Activated CD4-positive, alpha-beta T cell treated with anti-CD3 and anti-CD28 coated beads for 36 hours (primary cell): ENCODE measurements at regions of chr1 and their contacts with region 1.

Region 1: DNA sequence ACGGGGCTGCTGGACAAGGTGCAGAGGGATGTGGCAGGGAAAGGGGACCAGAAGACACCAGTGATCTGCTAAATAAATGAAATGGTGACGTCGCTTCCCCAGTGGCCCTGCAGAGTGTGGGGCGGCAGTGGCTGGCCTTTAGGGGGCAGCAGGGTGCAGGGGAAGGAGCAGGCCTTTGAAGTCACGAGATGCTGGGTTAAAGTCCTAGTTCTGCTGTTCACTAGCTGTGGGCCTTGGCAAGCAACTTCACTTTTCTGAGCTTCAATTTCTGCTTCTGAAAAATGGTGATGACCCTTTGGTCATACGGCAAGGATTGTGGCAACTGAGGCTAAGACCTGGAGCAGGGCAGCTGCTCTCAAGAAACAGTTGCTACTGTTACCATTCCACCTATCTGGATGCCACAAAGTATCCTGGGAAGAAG is 9.2 kb upstream of the GALE start:
- DNase-seq: peak; percentile 91
- ATAC-seq: peak; percentile 96
- H3K4me3 Mint-ChIP-seq: no peak overlapping the region
- H3K27ac Mint-ChIP-seq: no peak overlapping the region
- H3K4me1 Mint-ChIP-seq: peaks cover 13% of the 10 kb centered on the region
- H3K27me3 Mint-ChIP-seq: no peaks in the 10 kb centered on the region

Region 2: GRCh38 chr1:23772049-23772853 is 37.5 kb before region 1 on chr1:
- CTCF ChIA-PET with region 1: interaction called, 12 read pairs
- POLR2A ChIA-PET with region 1: interaction called, 3 read pairs
- intact Hi-C with region 1: no loop called
- DNase-seq: peak; percentile 94
- ATAC-seq: peak; percentile 95
- H3K4me3 Mint-ChIP-seq: no peak overlapping the region
- H3K27ac Mint-ChIP-seq: no peak overlapping the region
- H3K4me1 Mint-ChIP-seq: peaks cover 22% of the 10 kb centered on the region
- H3K27me3 Mint-ChIP-seq: no peaks in the 10 kb centered on the region

Region 3: GRCh38 chr1:23825076-23825761 is 15.5 kb after region 1 on chr1 and contains the start of gene HMGCL:
- CTCF ChIA-PET with region 1: interaction called, 41 read pairs
- POLR2A ChIA-PET with region 1: interaction called, 4 read pairs
- intact Hi-C with region 1: loop called in 1 of 2 experiments (anchors 1 kb)
- DNase-seq: peak; percentile 95
- ATAC-seq: peak; percentile 94
- H3K4me3 Mint-ChIP-seq: peak within 1 kb of the TSS; percentile 97
- H3K27ac Mint-ChIP-seq: peak within 1 kb of the TSS; percentile 97
- H3K4me1 Mint-ChIP-seq: peaks cover 19% of the 10 kb centered on the region
- H3K27me3 Mint-ChIP-seq: no peaks in the 10 kb centered on the region
- total RNA-seq, gene HMGCL: 31.9 to 46.0 TPM

Region 4: GRCh38 chr1:23854568-23854967 is 44.8 kb after region 1 on chr1:
- CTCF ChIA-PET with region 1: interaction called, 5 read pairs
- POLR2A ChIA-PET with region 1: no interaction called
- intact Hi-C with region 1: loop called in 1 of 2 experiments (anchors 1 kb)
- DNase-seq: peak; percentile 11
- ATAC-seq: peak; percentile 33
- H3K4me3 Mint-ChIP-seq: no peak overlapping the region
- H3K27ac Mint-ChIP-seq: no peak overlapping the region
- H3K4me1 Mint-ChIP-seq: no peaks in the 10 kb centered on the region
- H3K27me3 Mint-ChIP-seq: no peaks in the 10 kb centered on the region

Region 5: DNA sequence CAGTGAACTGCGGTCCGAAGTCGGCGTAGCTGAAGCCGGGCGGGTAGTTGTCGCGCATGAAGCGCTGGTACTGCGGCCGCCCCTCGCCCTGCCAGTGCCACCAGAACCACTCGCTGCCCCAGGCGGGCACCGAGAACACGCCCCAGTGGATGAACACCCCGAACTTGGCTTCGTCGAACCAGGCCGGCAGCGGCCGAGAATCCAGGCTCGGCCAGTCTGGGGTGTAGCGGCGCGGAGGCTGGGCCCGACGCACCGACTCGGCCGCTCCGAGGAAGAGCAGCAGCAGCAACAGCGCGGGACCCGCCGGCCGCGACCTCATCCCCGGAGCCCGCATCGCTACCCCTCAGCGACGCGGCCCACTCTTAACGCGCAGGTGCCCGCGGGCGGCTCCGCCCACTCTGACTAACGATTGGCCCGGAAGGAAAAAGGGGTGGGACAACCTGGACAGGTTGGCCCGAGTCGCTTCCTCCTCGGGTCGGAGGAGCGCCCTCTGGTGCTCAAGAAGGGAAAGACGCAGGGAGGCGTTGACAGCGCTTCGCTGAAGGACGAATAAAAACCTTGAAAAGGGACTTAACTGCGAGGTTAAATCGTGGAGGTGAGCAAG is 58.3 kb after region 1 on chr1 and contains the start of gene FUCA1:
- CTCF ChIA-PET with region 1: interaction called, 6 read pairs
- POLR2A ChIA-PET with region 1: no interaction called
- intact Hi-C with region 1: loop called (anchors 1 kb)
- DNase-seq: peak; percentile 95
- ATAC-seq: peak; percentile 97
- H3K4me3 Mint-ChIP-seq: peak within 1 kb of the TSS; percentile 76
- H3K27ac Mint-ChIP-seq: peak within 1 kb of the TSS; percentile 77
- H3K4me1 Mint-ChIP-seq: peaks cover 19% of the 10 kb centered on the region
- H3K27me3 Mint-ChIP-seq: no peaks in the 10 kb centered on the region
- total RNA-seq, gene FUCA1: 4.2 to 4.5 TPM

Region 6: DNA sequence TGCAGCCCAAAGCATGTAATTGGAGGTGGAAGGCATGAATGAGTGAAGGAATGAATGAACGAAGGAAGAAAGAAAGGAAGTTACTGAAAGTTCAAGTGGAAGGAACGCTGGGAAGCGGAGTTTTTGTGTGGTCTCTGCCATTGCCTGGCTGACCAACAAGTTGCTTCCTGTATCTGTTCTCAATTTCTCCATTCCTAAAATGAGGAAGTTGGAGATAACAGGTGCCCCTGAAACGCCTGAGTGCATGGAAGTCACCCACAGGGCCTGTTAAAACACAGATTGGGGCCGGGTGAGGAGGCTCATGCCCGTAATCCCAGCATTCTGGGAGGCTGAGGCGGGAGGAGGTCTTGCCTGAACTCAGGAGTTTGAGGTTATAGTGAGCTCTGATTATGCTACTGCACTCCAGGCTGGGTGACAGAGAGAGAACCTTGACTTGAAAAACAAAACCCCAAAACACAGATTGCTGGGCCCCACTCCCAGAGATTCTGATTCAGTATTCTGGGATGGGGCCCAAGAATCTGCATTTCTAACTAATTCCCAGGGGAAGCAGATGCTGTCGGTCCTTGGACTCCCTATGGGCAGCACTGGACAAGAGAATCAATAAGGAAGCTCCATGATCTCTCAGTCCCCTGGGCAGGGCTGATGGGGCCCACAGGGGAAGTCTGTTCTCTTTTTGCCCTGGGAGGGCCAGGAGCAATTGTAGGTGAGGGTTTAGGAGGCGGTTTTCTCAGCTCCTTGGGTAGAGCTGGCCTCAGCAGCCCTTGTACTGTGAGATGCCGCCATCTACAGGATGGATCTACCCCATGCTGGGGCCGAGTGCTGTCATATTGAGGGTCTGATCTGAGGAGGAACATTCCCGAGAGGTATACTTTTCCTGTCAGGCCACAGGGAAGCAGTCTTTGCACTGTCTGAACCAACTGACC is 106.7 kb after region 1 on chr1:
- CTCF ChIA-PET with region 1: interaction called, 21 read pairs
- POLR2A ChIA-PET with region 1: no interaction called
- intact Hi-C with region 1: loop called in 1 of 2 experiments (anchors 1 kb)
- DNase-seq: peak; percentile 75
- ATAC-seq: peak; percentile 94
- H3K4me3 Mint-ChIP-seq: no peak overlapping the region
- H3K27ac Mint-ChIP-seq: no peak overlapping the region
- H3K4me1 Mint-ChIP-seq: peaks cover 9% of the 10 kb centered on the region
- H3K27me3 Mint-ChIP-seq: peaks cover 2% of the 10 kb centered on the region

Region 7: GRCh38 chr1:24027838-24028468 is 218.2 kb after region 1 on chr1:
- CTCF ChIA-PET with region 1: interaction called, 8 read pairs
- POLR2A ChIA-PET with region 1: no interaction called
- intact Hi-C with region 1: loop called in 1 of 2 experiments (anchors 5 kb)
- DNase-seq: no peak
- ATAC-seq: no peak
- H3K4me3 Mint-ChIP-seq: no peak overlapping the region
- H3K27ac Mint-ChIP-seq: no peak overlapping the region
- H3K4me1 Mint-ChIP-seq: no peaks in the 10 kb centered on the region
- H3K27me3 Mint-ChIP-seq: no peaks in the 10 kb centered on the region